Aorta (tissue), 5 donors: ENCODE measurements at regions of chr1 and their contacts with region 1.

Region 1: GRCh38 chr1:59296358-59297256 is at the start of gene FGGY:
- DNase-seq: peak; percentile 98 to 100
- ATAC-seq: peak; percentile 96
- H3K4me3 ChIP-seq: peak within 1 kb of the TSS; percentile 54 to 75
- H3K27ac ChIP-seq: peak within 1 kb of the TSS; percentile 87 to 93
- H3K4me1 ChIP-seq: peaks cover 3 to 5% of the 10 kb centered on the region in 2 donors
- H3K27me3 ChIP-seq: no peaks in the 10 kb centered on the region
- total RNA-seq, gene FGGY: 17.3 to 25.1 TPM

Region 2: DNA sequence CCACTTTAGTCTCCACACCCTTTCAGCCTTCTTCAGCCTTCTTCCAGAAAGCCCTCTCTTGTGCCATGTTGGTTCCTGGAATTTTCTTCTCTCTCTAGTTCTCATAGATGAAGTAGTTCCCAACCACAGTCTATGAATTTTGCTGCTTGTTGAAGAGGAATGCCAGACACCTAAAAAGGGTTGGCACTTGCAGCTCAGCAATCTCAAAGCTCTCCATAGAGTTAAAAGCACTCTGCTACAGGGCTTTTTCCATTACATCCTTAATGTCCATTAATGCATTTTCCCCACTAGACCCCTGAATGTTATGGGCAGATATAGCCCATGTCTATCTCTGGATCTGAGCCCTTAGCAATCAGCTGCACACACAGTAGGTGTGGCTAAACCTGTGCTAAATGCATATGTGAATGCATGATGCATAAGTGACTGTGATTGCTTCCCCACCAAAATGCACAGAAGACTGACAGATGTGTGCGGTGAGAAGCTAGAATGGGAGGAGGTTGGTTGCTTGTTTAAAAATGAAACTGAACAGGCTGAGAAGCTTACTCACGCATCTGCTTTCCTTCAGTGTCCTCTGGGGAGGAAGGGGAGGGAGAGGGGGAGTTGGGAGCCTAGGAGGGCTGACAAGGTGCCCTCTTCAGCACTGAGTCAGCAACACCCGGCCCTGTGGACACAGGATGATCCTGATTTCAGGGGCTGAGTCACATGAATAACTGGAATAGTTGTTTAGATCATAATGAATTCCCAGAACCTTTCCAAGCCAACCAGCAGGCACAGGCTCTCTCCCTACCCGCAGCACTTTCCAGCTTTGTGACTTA is 145.8 kb before region 1 on chr1:
- intact Hi-C with region 1: loop called in 1 of 2 experiments (anchors 5 kb)
- DNase-seq: peak; percentile 86 to 88
- ATAC-seq: peak; percentile 83
- H3K4me3 ChIP-seq: peak overlapping the region in 1 of 2 donors; percentile 11
- H3K27ac ChIP-seq: peak overlapping the region; percentile 17 to 99
- H3K4me1 ChIP-seq: peaks cover 7 to 9% of the 10 kb centered on the region in 2 donors
- H3K27me3 ChIP-seq: no peaks in the 10 kb centered on the region

Region 3: GRCh38 chr1:59214248-59215208 is 82.1 kb before region 1 on chr1:
- intact Hi-C with region 1: no loop called
- DNase-seq: peak; percentile 73 to 84
- ATAC-seq: peak; percentile 93
- H3K4me3 ChIP-seq: no peak overlapping the region
- H3K27ac ChIP-seq: peak overlapping the region; percentile 91 to 93
- H3K4me1 ChIP-seq: peaks cover 8 to 9% of the 10 kb centered on the region in 2 donors
- H3K27me3 ChIP-seq: no peaks in the 10 kb centered on the region

Region 4: GRCh38 chr1:59432531-59433439 is 136.2 kb after region 1 on chr1:
- intact Hi-C with region 1: loop called in 1 of 2 experiments (anchors 10 kb)
- DNase-seq: no peak
- ATAC-seq: no peak
- H3K4me3 ChIP-seq: no peak overlapping the region
- H3K27ac ChIP-seq: peak overlapping the region; percentile 37 to 65
- H3K4me1 ChIP-seq: peaks cover 4 to 6% of the 10 kb centered on the region in 2 donors
- H3K27me3 ChIP-seq: no peaks in the 10 kb centered on the region

Region 5: GRCh38 chr1:59699227-59699847 is 402.7 kb after region 1 on chr1:
- intact Hi-C with region 1: loop called (anchors 5 to 10 kb)
- DNase-seq: no peak
- ATAC-seq: peak; percentile 60
- H3K4me3 ChIP-seq: no peak overlapping the region
- H3K27ac ChIP-seq: no peak overlapping the region
- H3K4me1 ChIP-seq: peaks cover 3 to 11% of the 10 kb centered on the region in 2 donors
- H3K27me3 ChIP-seq: no peaks in the 10 kb centered on the region

Region 6: DNA sequence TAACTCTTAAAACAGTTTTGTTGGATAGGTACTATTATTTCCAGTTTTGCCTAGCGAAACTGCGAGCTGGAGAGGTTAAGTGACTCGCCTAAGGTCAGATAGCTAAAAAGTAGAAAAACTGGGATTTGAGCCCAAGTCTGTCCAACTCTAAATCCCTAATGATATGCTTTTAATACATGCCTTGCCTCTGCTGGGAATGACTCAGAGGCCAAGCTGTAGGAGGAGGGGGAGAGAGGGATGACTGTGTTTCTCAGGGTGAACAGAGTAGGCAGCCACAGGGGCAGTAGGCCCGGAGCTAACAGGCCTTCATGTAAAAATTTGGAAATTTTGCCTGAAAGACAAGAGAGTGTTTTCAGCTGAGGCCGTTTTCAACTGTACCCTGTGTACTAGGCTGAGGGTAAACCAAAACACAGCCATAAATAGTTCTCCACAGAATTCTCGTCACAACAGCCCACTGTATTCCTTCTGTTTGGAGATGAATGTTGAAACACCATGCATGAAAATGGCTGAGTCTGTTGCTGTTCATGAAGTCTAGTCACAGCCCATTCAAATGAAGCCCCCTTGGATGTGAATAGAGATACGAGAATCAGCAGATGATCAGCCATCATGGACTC is 410.7 kb after region 1 on chr1:
- intact Hi-C with region 1: loop called in 1 of 2 experiments (anchors 10 kb)
- DNase-seq: peak; percentile 77
- ATAC-seq: peak; percentile 82
- H3K4me3 ChIP-seq: no peak overlapping the region
- H3K27ac ChIP-seq: peak overlapping the region in 1 of 2 donors; percentile 78
- H3K4me1 ChIP-seq: peaks cover 5 to 20% of the 10 kb centered on the region in 2 donors
- H3K27me3 ChIP-seq: no peaks in the 10 kb centered on the region